Natural killer cell (primary cell): ENCODE measurements at regions of chr7 and their contacts with region 1.

Region 1: GRCh38 chr7:135147899-135148721 is at the start of gene TMEM140:
- DNase-seq: peak; percentile 62 to 87
- ATAC-seq: peak; percentile 78 to 87 (median 80)
- H3K4me3 ChIP-seq: peak within 1 kb of the TSS; percentile 66
- H3K4me3 Mint-ChIP-seq: peak within 1 kb of the TSS; percentile 93
- H3K27ac ChIP-seq: peak within 1 kb of the TSS; percentile 98
- H3K27ac Mint-ChIP-seq: peak within 1 kb of the TSS; percentile 95 to 98
- H3K4me1 ChIP-seq: peaks cover 21% of the 10 kb centered on the region
- H3K4me1 Mint-ChIP-seq: peaks cover 59 to 63% of the 10 kb centered on the region in 2 donors
- H3K27me3 ChIP-seq: no peaks in the 10 kb centered on the region
- H3K27me3 Mint-ChIP-seq: no peaks in the 10 kb centered on the region
- CTCF ChIP-seq: no peak
- total RNA-seq, gene TMEM140: 60.0 to 81.7 (median 76.9) TPM

Region 2: DNA sequence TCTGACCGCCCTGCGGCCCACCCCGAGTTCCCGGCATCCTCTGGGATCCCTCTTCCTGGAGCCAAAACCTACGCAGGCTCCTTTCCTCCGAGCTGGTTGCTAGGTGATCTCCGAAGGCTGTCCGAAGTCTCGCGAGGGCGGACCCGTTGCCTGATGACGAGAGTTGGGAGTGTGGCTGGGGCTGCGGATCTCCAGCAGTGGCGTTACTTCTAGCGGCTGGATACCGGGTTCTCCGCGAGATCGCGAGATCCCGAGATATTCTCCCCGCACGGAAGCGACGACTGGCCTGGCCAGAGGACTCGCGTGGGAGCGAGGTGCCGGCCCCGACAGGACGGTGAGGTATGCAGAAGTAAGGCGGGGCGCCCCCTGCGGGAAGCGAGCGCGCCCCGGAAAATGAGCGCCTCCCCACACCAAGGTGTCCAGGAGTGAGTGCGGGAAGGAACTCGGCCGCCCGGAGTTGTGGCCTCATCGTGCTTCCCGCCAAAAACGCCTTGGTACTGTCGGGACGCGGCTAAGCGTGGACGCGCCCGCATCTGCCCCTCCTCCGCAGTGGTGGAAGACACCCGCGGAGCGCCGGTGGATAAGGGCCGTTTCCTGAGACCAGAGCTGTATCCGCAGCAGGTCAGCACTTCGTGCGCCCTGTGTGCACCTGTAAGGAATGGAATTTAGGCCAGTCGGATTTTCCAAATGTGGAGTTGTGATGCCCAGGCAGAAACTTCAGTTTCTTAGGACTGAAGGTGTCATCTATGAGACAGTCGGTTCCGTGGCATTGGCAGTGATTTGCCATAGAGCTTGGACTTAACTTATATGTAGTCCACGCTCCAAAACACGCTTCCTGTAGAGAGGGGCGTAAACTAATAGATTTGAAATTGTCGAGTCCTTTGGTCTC is 161.5 kb before region 1 on chr7 and contains the start of gene AGBL3:
- intact Hi-C with region 1: loop called (anchors 2 kb)
- DNase-seq: peak; percentile 81 to 94
- ATAC-seq: peak; percentile 91 to 92 (median 91)
- H3K4me3 ChIP-seq: peak within 1 kb of the TSS; percentile 75
- H3K4me3 Mint-ChIP-seq: peak within 1 kb of the TSS; percentile 98
- H3K27ac ChIP-seq: peak within 1 kb of the TSS; percentile 73
- H3K27ac Mint-ChIP-seq: peak within 1 kb of the TSS; percentile 96 to 99
- H3K4me1 ChIP-seq: no peaks in the 10 kb centered on the region
- H3K4me1 Mint-ChIP-seq: peaks cover 19 to 29% of the 10 kb centered on the region in 2 donors
- H3K27me3 ChIP-seq: no peaks in the 10 kb centered on the region
- H3K27me3 Mint-ChIP-seq: no peaks in the 10 kb centered on the region
- CTCF ChIP-seq: peak; percentile 75
- total RNA-seq, gene AGBL3: 0.99 to 2.3 (median 1.4) TPM

Region 3: GRCh38 chr7:135211179-135211945 is 63.3 kb after region 1 on chr7 and contains the start of gene WDR91:
- intact Hi-C with region 1: loop called (anchors 2 kb)
- DNase-seq: peak; percentile 89 to 97
- ATAC-seq: peak; percentile 93 to 99 (median 94)
- H3K4me3 ChIP-seq: peak within 1 kb of the TSS; percentile 88
- H3K4me3 Mint-ChIP-seq: peak within 1 kb of the TSS; percentile 99
- H3K27ac ChIP-seq: peak within 1 kb of the TSS; percentile 87
- H3K27ac Mint-ChIP-seq: peak within 1 kb of the TSS; percentile 91 to 95
- H3K4me1 ChIP-seq: peaks cover 26% of the 10 kb centered on the region
- H3K4me1 Mint-ChIP-seq: peaks cover 17 to 35% of the 10 kb centered on the region in 2 donors
- H3K27me3 ChIP-seq: no peaks in the 10 kb centered on the region
- H3K27me3 Mint-ChIP-seq: peaks cover 0 to 3% of the 10 kb centered on the region in 2 donors
- CTCF ChIP-seq: no peak
- total RNA-seq, gene WDR91: 28.7 to 42.0 (median 39.2) TPM